Activated CD4-positive, alpha-beta T cell treated with anti-CD3 and anti-CD28 coated beads for 36 hours (primary cell): ENCODE measurements at regions of chr3 and their contacts with region 1.

Region 1: DNA sequence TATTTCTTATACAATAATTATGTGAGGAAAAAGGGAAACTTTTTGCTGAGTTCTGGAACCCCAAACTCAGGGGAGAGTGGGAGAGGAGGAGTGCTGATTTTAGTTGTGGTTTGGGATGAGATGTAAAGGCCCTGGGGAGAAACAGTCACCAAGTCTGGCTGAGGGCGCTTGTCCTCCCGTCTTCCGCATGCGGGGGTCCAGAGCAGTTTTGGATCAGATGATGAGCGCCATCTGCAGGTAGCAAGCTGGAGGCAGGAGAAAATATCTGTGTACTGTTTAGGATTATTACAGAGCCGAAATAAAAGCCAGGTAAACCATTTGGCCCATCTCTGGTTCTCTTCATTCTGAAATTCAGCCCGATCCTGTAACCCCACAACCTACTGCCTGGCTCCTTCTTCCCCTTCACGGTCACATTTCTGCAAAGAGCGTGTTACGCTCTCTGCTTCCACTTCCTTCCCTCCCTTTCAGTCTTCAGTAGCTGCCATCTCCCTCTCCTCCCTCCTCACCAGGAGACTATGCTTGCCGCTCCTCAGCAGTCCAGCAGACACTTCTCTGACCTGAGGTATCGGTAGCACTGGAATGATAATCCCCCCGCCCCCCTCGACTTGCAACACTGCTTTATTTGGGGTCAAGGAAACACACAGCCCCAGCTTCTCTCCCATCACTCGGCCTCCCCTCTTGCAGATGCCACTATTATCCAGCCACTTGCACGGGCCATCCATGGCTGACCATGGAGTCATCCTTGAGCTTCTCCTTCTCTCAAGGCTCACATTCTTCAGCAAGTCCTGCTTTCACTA is 1.4 kb upstream of the PARP14 start:
- DNase-seq: peak; percentile 91
- ATAC-seq: peak; percentile 69
- H3K4me3 Mint-ChIP-seq: peak overlapping the region; percentile 95
- H3K27ac Mint-ChIP-seq: peak overlapping the region; percentile 97
- H3K4me1 Mint-ChIP-seq: peaks cover 51% of the 10 kb centered on the region
- H3K27me3 Mint-ChIP-seq: no peaks in the 10 kb centered on the region

Region 2: GRCh38 chr3:121834696-121835464 is 844.4 kb before region 1 on chr3 and contains the starts of genes EAF2 and IQCB1:
- CTCF ChIA-PET with region 1: no interaction called
- POLR2A ChIA-PET with region 1: no interaction called
- intact Hi-C with region 1: loop called in 1 of 2 experiments (anchors 10 kb)
- DNase-seq: peak; percentile 98
- ATAC-seq: peak; percentile 98
- H3K4me3 Mint-ChIP-seq: peak within 1 kb of the TSS; percentile 98
- H3K27ac Mint-ChIP-seq: peak within 1 kb of the TSS; percentile 94
- H3K4me1 Mint-ChIP-seq: peaks cover 38% of the 10 kb centered on the region
- H3K27me3 Mint-ChIP-seq: no peaks in the 10 kb centered on the region
- total RNA-seq, gene EAF2: 12.4 to 12.9 TPM
- total RNA-seq, gene IQCB1: 41.3 to 42.8 TPM

Region 3: DNA sequence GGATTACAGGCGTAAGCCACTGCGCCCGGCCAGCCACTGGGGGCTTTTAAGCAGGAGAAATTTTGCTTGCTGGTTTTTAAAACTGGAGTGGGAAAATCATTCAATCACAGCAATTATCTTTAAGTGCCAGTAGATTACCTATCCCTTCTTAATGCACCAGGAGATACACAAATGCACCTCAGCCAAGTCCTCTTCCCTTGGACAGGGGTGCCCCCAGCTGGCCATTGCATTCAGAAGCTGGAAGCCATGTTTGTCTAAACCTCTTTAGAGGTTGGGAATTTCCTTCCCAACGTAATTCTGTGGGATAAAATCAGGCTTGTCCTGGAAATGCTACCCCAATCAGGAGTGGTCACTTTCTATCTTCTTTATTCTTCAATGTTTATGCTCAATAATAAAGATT is 322.9 kb before region 1 on chr3:
- CTCF ChIA-PET with region 1: no interaction called
- POLR2A ChIA-PET with region 1: no interaction called
- intact Hi-C with region 1: no loop called
- DNase-seq: peak; percentile 45
- ATAC-seq: no peak
- H3K4me3 Mint-ChIP-seq: no peak overlapping the region
- H3K27ac Mint-ChIP-seq: no peak overlapping the region
- H3K4me1 Mint-ChIP-seq: peaks cover 4% of the 10 kb centered on the region
- H3K27me3 Mint-ChIP-seq: no peaks in the 10 kb centered on the region

Region 4: GRCh38 chr3:122392868-122393844 is 286.1 kb before region 1 on chr3:
- CTCF ChIA-PET with region 1: interaction called, 28 read pairs
- POLR2A ChIA-PET with region 1: no interaction called
- intact Hi-C with region 1: loop called (anchors 1 kb)
- DNase-seq: no peak
- ATAC-seq: peak; percentile 55
- H3K4me3 Mint-ChIP-seq: no peak overlapping the region
- H3K27ac Mint-ChIP-seq: no peak overlapping the region
- H3K4me1 Mint-ChIP-seq: peaks cover 33% of the 10 kb centered on the region
- H3K27me3 Mint-ChIP-seq: no peaks in the 10 kb centered on the region

Region 5: DNA sequence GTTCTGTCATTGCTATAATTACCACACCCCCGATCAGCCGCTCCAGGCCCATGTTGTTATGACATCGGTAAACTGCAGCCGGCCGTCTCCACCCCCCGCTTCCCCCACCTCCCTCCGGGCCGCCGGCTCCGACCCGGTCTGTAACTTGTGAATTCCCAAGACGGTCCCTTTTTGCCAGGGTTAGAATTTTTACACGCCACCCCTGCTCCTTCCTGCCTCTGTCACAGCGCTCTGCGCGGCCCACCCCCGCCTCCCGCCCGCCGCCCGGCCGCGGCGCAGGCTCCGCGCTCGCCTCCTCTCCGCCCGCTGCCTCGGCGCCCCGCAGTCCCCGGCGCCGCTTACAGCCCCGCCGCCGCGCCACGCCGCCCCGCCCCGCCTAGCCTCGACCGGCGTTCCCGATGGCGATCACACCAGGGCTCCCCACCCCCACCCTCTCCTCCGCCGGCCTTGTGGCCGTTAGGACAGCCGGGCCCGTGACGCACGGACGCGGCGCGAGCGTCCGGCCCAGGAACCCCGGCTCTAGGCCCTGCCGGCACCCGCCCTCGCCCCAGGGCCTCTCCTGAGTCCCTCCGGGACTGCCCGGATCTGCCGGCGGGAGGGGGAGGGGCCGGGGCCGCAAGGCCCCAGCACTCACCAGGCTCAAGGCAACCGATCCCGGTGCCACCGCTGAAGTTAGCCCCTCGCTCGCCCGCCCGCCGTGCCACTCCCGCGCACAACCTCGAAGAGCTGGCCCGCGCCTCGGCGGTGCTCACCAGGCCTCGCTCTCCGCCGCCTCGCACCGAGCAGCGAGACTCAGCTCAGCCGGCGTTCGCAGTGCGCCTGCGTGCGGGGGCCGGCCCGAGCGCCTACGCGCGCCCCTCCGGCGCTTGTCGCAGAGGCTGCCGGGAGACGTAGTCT is 164.9 kb before region 1 on chr3 and contains the start of gene KPNA1:
- CTCF ChIA-PET with region 1: interaction called, 13 read pairs
- POLR2A ChIA-PET with region 1: no interaction called
- intact Hi-C with region 1: loop called in 1 of 2 experiments (anchors 1 kb)
- DNase-seq: peak; percentile 93
- ATAC-seq: peak; percentile 93
- H3K4me3 Mint-ChIP-seq: peak within 1 kb of the TSS; percentile 77
- H3K27ac Mint-ChIP-seq: peak within 1 kb of the TSS; percentile 84
- H3K4me1 Mint-ChIP-seq: peaks cover 39% of the 10 kb centered on the region
- H3K27me3 Mint-ChIP-seq: no peaks in the 10 kb centered on the region
- total RNA-seq, gene KPNA1: 37.5 to 42.6 TPM

Region 6: DNA sequence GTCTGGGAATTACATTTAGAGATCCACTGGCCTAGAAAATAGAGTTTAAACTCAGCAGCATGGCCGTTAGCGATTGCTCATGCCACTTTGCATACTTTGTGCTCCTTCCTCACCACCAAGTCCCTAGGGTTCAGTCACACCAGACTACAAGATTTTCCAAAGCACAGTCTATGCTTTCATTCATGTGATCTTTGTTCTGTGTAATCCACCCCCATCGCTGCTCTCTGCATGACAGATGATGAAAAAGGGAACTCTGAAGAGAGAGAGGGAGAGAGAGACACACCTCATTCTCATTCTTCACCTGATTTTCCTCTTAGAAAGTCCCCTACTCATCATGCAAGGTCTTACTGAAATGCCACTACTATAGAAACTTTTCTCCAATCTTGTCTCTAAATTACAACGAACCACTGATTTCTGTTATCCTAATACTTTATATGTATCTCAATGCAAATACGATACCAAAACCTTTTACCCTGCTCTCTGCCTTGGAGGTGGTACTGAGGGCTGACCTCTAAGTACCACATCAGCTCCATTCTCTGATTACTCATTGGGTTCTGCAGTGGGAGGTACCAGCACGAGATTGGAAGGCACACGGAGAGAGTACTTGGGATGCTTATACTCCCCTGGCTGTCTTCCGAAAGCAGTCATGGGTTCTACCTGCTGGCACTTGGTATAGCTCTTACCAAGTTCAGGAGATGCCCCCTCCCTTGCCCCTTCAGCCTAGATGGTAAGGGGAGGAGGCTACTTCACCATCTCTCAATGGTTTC is 102.9 kb before region 1 on chr3:
- CTCF ChIA-PET with region 1: interaction called, 21 read pairs
- POLR2A ChIA-PET with region 1: no interaction called
- intact Hi-C with region 1: loop called (anchors 1 to 5 kb)
- DNase-seq: peak; percentile 78
- ATAC-seq: peak; percentile 90
- H3K4me3 Mint-ChIP-seq: peak overlapping the region; percentile 24
- H3K27ac Mint-ChIP-seq: peak overlapping the region; percentile 87
- H3K4me1 Mint-ChIP-seq: peaks cover 58% of the 10 kb centered on the region
- H3K27me3 Mint-ChIP-seq: no peaks in the 10 kb centered on the region

Region 7: DNA sequence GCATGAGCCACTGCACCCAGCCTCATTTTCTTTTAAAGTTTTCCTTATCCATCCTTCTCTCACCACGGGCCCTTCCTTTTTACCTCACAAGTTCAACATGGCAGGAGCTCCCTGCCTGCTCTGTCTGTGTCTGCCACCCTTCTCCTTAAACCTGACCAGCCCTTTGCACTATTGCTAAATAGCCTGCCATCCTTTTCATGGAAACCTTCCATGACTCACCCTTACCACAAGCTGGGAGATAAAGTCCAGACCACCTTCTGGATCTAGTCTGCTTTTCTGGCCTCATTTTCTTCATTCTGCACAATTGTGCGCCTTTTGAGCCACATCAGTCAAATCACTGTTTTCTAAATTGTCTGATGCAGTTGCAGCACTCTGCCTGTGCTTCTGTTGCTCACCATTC is 10.3 kb after region 1 on chr3:
- CTCF ChIA-PET with region 1: interaction called, 12 read pairs
- POLR2A ChIA-PET with region 1: no interaction called
- intact Hi-C with region 1: no loop called
- DNase-seq: no peak
- ATAC-seq: no peak
- H3K4me3 Mint-ChIP-seq: no peak overlapping the region
- H3K27ac Mint-ChIP-seq: no peak overlapping the region
- H3K4me1 Mint-ChIP-seq: peaks cover 8% of the 10 kb centered on the region
- H3K27me3 Mint-ChIP-seq: no peaks in the 10 kb centered on the region

Region 8: DNA sequence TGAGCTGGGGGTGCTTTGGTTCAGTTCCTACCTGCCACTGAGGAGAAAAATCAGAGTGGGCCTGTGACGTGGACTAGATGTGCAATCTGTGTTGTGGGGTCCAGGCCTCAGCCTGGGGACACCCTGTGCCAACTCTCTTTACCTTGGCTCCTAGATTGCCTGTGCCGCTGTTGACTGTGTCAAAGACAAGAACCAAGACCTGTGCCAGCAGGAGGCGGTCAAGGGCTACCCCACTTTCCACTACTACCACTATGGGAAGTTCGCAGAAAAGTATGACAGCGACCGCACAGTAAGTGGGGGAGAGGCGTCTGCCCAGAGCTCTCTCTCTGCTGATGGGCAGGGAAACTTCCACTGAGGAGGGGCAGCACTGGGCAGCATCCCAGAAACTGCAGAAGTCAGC is 481.9 kb after region 1 on chr3:
- CTCF ChIA-PET with region 1: no interaction called
- POLR2A ChIA-PET with region 1: no interaction called
- intact Hi-C with region 1: no loop called
- DNase-seq: no peak
- ATAC-seq: no peak
- H3K4me3 Mint-ChIP-seq: no peak overlapping the region
- H3K27ac Mint-ChIP-seq: no peak overlapping the region
- H3K4me1 Mint-ChIP-seq: no peaks in the 10 kb centered on the region
- H3K27me3 Mint-ChIP-seq: no peaks in the 10 kb centered on the region

Region 9: GRCh38 chr3:123201566-123202427 is 522.5 kb after region 1 on chr3 and contains the start of gene SEC22A:
- CTCF ChIA-PET with region 1: interaction called, 3 read pairs
- POLR2A ChIA-PET with region 1: no interaction called
- intact Hi-C with region 1: loop called in 1 of 2 experiments (anchors 5 kb)
- DNase-seq: peak; percentile 98
- ATAC-seq: peak; percentile 99
- H3K4me3 Mint-ChIP-seq: peak within 1 kb of the TSS; percentile 96
- H3K27ac Mint-ChIP-seq: peak within 1 kb of the TSS; percentile 97
- H3K4me1 Mint-ChIP-seq: peaks cover 28% of the 10 kb centered on the region
- H3K27me3 Mint-ChIP-seq: no peaks in the 10 kb centered on the region
- total RNA-seq, gene SEC22A: 13.2 to 16.3 TPM